Mucosa of descending colon (tissue), 3 donors: ENCODE measurements at regions of chr1 and their contacts with region 1.

Region 1: GRCh38 chr1:220810179-220810653 is 23.5 kb downstream of the MTARC1 start:
- DNase-seq: peak; percentile 66 to 79 (median 74)
- ATAC-seq: peak; percentile 91
- H3K4me3 ChIP-seq: no peak overlapping the region
- H3K4me1 ChIP-seq: no peaks in the 10 kb centered on the region
- CTCF ChIP-seq: peak; percentile 92

Region 2: DNA sequence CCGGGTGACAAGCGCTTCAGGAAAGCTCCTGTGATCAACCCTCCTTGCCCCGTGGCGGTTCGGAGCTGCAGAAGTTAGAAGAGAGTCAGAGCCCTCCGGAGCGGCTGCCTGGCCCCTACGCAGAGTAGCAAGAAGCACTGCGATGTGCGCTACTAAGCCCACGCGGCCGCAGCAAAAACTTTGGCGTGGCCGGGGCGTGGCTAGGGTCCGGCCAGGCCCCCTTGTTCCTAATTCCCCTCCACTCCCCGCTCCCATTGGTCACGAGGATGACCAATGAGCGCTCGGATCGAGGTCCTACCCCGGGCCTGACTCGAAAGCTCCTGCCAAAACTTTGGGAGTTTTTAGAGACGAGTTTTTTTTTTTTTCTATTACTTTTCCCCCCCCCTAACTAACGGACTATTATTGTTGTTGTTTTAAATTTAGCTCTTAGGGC is 68.9 kb after region 1 on chr1 and contains the start of gene HLX:
- intact Hi-C with region 1: loop called in 1 of 2 experiments (anchors 10 kb)
- DNase-seq: peak; percentile 77 to 90 (median 78)
- ATAC-seq: peak; percentile 75
- H3K4me3 ChIP-seq: peak within 1 kb of the TSS; percentile 20
- H3K4me1 ChIP-seq: peaks cover 15% of the 10 kb centered on the region
- CTCF ChIP-seq: no peak
- total RNA-seq, gene HLX: 2.6 to 43.4 (median 6.2) TPM